ENCODE measurements at regions of chr6 and their contacts with region 1.

Region 1: GRCh38 chr6:16332175-16332542 is 93.8 kb downstream of the GMPR start:
- DNase-seq: peak; percentile 78
- ATAC-seq: peak; percentile 94
- H3K4me3 ChIP-seq: no peak overlapping the region
- H3K27ac ChIP-seq: no peak overlapping the region
- H3K4me1 ChIP-seq: peaks cover 7% of the 10 kb centered on the region
- H3K27me3 ChIP-seq: no peaks in the 10 kb centered on the region
- CTCF ChIP-seq: peak; percentile 91
- EP300 ChIP-seq: no peak
- POLR2A ChIP-seq: no peak
- RAD21 ChIP-seq: peak; percentile 79; the same call in 1 of the 2 replicates

Region 2: GRCh38 chr6:16345437-16346330 is 13.5 kb after region 1 on chr6:
- CTCF ChIA-PET with region 1: no interaction called
- POLR2A ChIA-PET with region 1: no interaction called
- in situ Hi-C with region 1: no loop called
- intact Hi-C with region 1: no loop called
- DNase-seq: peak; percentile 71
- ATAC-seq: peak; percentile 73
- H3K4me3 ChIP-seq: no peak overlapping the region
- H3K27ac ChIP-seq: no peak overlapping the region
- H3K4me1 ChIP-seq: peaks cover 14% of the 10 kb centered on the region
- H3K27me3 ChIP-seq: no peaks in the 10 kb centered on the region
- CTCF ChIP-seq: no peak
- EP300 ChIP-seq: no peak
- POLR2A ChIP-seq: no peak
- RAD21 ChIP-seq: no peak

Region 3: GRCh38 chr6:16409531-16410441 is 77.6 kb after region 1 on chr6:
- CTCF ChIA-PET with region 1: interaction called, 5 read pairs
- POLR2A ChIA-PET with region 1: no interaction called
- in situ Hi-C with region 1: no loop called
- intact Hi-C with region 1: loop called (anchors 2 kb)
- DNase-seq: peak; percentile 45
- ATAC-seq: peak; percentile 82
- H3K4me3 ChIP-seq: no peak overlapping the region
- H3K27ac ChIP-seq: no peak overlapping the region
- H3K4me1 ChIP-seq: no peaks in the 10 kb centered on the region; the same call in 1 of the 2 replicates
- H3K27me3 ChIP-seq: no peaks in the 10 kb centered on the region
- CTCF ChIP-seq: peak; percentile 73
- EP300 ChIP-seq: no peak
- POLR2A ChIP-seq: no peak
- RAD21 ChIP-seq: no peak

Region 4: GRCh38 chr6:16494793-16495192 is 162.6 kb after region 1 on chr6:
- CTCF ChIA-PET with region 1: no interaction called
- POLR2A ChIA-PET with region 1: no interaction called
- in situ Hi-C with region 1: no loop called
- intact Hi-C with region 1: loop called (anchors 10 kb)
- DNase-seq: no peak
- ATAC-seq: no peak
- H3K4me3 ChIP-seq: no peak overlapping the region
- H3K27ac ChIP-seq: no peak overlapping the region
- H3K4me1 ChIP-seq: peaks cover 21% of the 10 kb centered on the region
- H3K27me3 ChIP-seq: no peaks in the 10 kb centered on the region
- CTCF ChIP-seq: no peak
- EP300 ChIP-seq: no peak
- POLR2A ChIP-seq: no peak
- RAD21 ChIP-seq: no peak

Region 5: DNA sequence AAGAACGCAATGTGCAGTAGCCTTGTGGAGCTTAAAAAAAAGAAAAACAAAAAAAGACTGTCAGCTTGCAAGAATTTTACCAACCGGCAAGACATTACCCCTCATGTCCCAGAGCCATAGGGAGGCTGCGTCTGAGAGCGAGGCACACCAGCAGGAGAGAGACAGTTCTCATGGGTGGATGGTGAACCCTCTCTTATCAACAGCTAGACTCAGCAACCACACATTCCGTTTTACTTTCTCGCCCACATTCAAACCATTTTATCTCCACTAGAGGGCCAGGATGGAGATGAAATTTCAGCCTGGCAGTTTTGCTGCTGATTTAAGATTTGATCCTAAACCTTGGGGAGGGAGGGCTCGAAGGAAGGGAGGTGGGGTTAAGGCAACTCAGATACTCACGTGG is 182.1 kb after region 1 on chr6:
- CTCF ChIA-PET with region 1: no interaction called
- POLR2A ChIA-PET with region 1: no interaction called
- in situ Hi-C with region 1: no loop called
- intact Hi-C with region 1: no loop called
- DNase-seq: peak; percentile 28
- ATAC-seq: peak; percentile 44
- H3K4me3 ChIP-seq: no peak overlapping the region
- H3K27ac ChIP-seq: no peak overlapping the region
- H3K4me1 ChIP-seq: peaks cover 20% of the 10 kb centered on the region
- H3K27me3 ChIP-seq: no peaks in the 10 kb centered on the region
- CTCF ChIP-seq: peak; percentile 43; the same call in 1 of the 2 replicates
- EP300 ChIP-seq: no peak
- POLR2A ChIP-seq: no peak
- RAD21 ChIP-seq: no peak

Region 6: GRCh38 chr6:16964553-16965501 is 632.7 kb after region 1 on chr6:
- CTCF ChIA-PET with region 1: interaction called, 4 read pairs
- POLR2A ChIA-PET with region 1: no interaction called
- in situ Hi-C with region 1: loop called (anchors 25 kb)
- intact Hi-C with region 1: loop called (anchors 5 kb)
- DNase-seq: peak; percentile 67
- ATAC-seq: peak; percentile 99
- H3K4me3 ChIP-seq: peak overlapping the region in 1 of 3 experiments; percentile 32; a peak in 2 of 6 replicates
- H3K27ac ChIP-seq: no peak overlapping the region
- H3K4me1 ChIP-seq: peaks cover 6% of the 10 kb centered on the region
- H3K27me3 ChIP-seq: peaks cover 0 to 21% of the 10 kb centered on the region in 2 experiments; a peak in 2 of 5 replicates
- CTCF ChIP-seq: peak; percentile 97
- EP300 ChIP-seq: no peak
- POLR2A ChIP-seq: no peak
- RAD21 ChIP-seq: peak; percentile 88

Region 7: GRCh38 chr6:17086469-17086868 is 754.3 kb after region 1 on chr6:
- CTCF ChIA-PET with region 1: no interaction called
- POLR2A ChIA-PET with region 1: no interaction called
- in situ Hi-C with region 1: no loop called
- intact Hi-C with region 1: loop called (anchors 1 kb)
- DNase-seq: peak; percentile 63
- ATAC-seq: peak; percentile 95
- H3K4me3 ChIP-seq: no peak overlapping the region
- H3K27ac ChIP-seq: no peak overlapping the region
- H3K4me1 ChIP-seq: no peaks in the 10 kb centered on the region
- H3K27me3 ChIP-seq: peaks cover 0 to 10% of the 10 kb centered on the region in 2 experiments; a peak in 1 of 5 replicates
- CTCF ChIP-seq: peak; percentile 74
- EP300 ChIP-seq: no peak
- POLR2A ChIP-seq: no peak
- RAD21 ChIP-seq: 0 out of 2 replicates have a peak, but pooled peaks have one; percentile 39